ENCODE measurements at regions of chr10 and their contacts with region 1.

Region 1: DNA sequence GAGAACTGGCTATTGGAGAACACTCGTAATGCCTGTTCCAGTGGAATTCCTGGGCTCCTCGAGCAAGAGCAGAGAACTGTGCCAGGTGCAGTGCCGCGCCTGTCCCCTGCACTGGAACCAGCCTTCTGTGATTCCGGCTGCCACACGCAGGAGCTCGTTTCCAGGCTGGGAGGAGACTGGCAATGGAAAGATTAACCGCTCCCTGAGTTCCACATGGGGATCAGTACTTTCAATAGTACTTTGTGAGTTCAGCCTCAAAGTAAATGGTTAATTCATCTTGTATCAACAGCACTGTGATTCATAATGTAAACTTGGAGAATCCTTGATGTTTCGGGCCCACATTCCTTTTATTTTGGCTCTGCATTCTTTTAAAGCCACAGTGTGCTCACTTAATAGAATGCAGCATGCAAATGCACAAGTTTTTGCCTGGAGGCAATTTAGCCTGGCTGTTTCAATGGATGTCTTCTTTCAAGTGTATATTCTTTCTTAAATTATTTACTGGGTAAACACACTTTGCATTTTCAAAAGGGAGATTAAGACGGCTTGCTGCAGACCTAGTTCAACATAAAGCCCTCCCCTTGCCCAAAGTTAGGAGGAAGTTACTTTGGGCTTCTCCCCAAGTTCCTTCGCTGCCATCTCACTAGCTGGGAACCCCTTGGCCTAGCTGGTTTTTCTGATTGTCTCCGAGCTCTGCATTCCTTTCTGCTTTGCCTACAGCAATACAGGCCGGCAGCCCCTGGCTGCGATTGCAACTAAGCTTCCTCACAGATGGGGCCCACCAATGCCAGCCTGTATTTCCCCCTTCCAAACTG is 138.1 kb upstream of the TCF7L2 start:
- DNase-seq: peak; percentile 85 to 87
- H3K4me3 ChIP-seq: no peak overlapping the region
- H3K4me3 Mint-ChIP-seq: peak overlapping the region; percentile 76
- H3K27ac Mint-ChIP-seq: peak overlapping the region; percentile 95
- H3K4me1 ChIP-seq: peaks cover 50% of the 10 kb centered on the region
- H3K4me1 Mint-ChIP-seq: peaks cover 58% of the 10 kb centered on the region
- H3K27me3 ChIP-seq: no peaks in the 10 kb centered on the region
- H3K27me3 Mint-ChIP-seq: no peaks in the 10 kb centered on the region
- CTCF ChIP-seq: no peak

Region 2: GRCh38 chr10:112728118-112728883 is 83.6 kb before region 1 on chr10:
- CTCF ChIA-PET with region 1: interaction called, 3 read pairs
- POLR2A ChIA-PET with region 1: interaction called, 3 read pairs
- intact Hi-C with region 1: loop called (anchors 1 kb)
- DNase-seq: peak; percentile 66 to 69
- H3K4me3 ChIP-seq: no peak overlapping the region
- H3K4me3 Mint-ChIP-seq: peak overlapping the region; percentile 50
- H3K27ac Mint-ChIP-seq: peak overlapping the region; percentile 94
- H3K4me1 ChIP-seq: peaks cover 78% of the 10 kb centered on the region
- H3K4me1 Mint-ChIP-seq: peaks cover 70% of the 10 kb centered on the region
- H3K27me3 ChIP-seq: no peaks in the 10 kb centered on the region
- H3K27me3 Mint-ChIP-seq: no peaks in the 10 kb centered on the region
- CTCF ChIP-seq: no peak

Region 3: GRCh38 chr10:112767156-112767555 is 44.8 kb before region 1 on chr10:
- CTCF ChIA-PET with region 1: no interaction called
- POLR2A ChIA-PET with region 1: interaction called, 3 read pairs
- intact Hi-C with region 1: loop called (anchors 2 kb)
- DNase-seq: no peak
- H3K4me3 ChIP-seq: no peak overlapping the region
- H3K4me3 Mint-ChIP-seq: no peak overlapping the region
- H3K27ac Mint-ChIP-seq: peak overlapping the region; percentile 12
- H3K4me1 ChIP-seq: peaks cover 49% of the 10 kb centered on the region
- H3K4me1 Mint-ChIP-seq: peaks cover 46% of the 10 kb centered on the region
- H3K27me3 ChIP-seq: no peaks in the 10 kb centered on the region
- H3K27me3 Mint-ChIP-seq: no peaks in the 10 kb centered on the region
- CTCF ChIP-seq: no peak

Region 4: GRCh38 chr10:112835944-112836451 is 24.1 kb after region 1 on chr10:
- CTCF ChIA-PET with region 1: no interaction called
- POLR2A ChIA-PET with region 1: interaction called, 3 read pairs
- intact Hi-C with region 1: loop called (anchors 2 kb)
- DNase-seq: no peak
- H3K4me3 ChIP-seq: no peak overlapping the region
- H3K4me3 Mint-ChIP-seq: no peak overlapping the region
- H3K27ac Mint-ChIP-seq: no peak overlapping the region
- H3K4me1 ChIP-seq: peaks cover 27% of the 10 kb centered on the region
- H3K4me1 Mint-ChIP-seq: peaks cover 7% of the 10 kb centered on the region
- H3K27me3 ChIP-seq: no peaks in the 10 kb centered on the region
- H3K27me3 Mint-ChIP-seq: no peaks in the 10 kb centered on the region
- CTCF ChIP-seq: no peak

Region 5: GRCh38 chr10:112949875-112950507 is 138.0 kb after region 1 on chr10 and contains the start of gene TCF7L2:
- CTCF ChIA-PET with region 1: interaction called, 11 read pairs
- POLR2A ChIA-PET with region 1: no interaction called
- intact Hi-C with region 1: loop called (anchors 1 kb)
- DNase-seq: peak; percentile 96 to 99
- H3K4me3 ChIP-seq: peak within 1 kb of the TSS; percentile 87
- H3K4me3 Mint-ChIP-seq: peak within 1 kb of the TSS; percentile 90
- H3K27ac Mint-ChIP-seq: peak within 1 kb of the TSS; percentile 94
- H3K4me1 ChIP-seq: peaks cover 44% of the 10 kb centered on the region
- H3K4me1 Mint-ChIP-seq: peaks cover 33% of the 10 kb centered on the region
- H3K27me3 ChIP-seq: no peaks in the 10 kb centered on the region
- H3K27me3 Mint-ChIP-seq: no peaks in the 10 kb centered on the region
- CTCF ChIP-seq: no peak
- total RNA-seq, gene TCF7L2: 45.4 and 50.9 TPM in 2 replicates

Measured in Caco-2 (cell line).